OCI-LY7 (cell line): ENCODE measurements at regions of chr6 and their contacts with region 1.

Region 1: DNA sequence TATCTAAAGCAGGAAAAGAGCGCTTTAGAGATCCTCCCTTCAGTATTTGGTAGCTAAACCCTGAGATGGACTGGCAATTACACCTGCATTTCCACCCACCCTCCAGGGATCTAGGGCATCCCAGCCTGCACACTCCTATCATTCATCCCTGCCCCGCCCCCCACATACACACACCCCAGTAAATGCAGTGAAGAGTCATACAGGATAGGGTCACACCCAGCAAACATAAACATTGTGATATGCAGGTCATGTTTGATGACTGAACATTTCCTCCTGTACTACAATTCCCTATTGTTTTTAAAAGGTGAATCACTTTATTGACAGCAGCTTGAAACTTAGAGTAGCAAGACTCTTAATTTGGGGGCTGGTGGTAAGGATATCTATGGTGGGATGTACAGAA is 112.9 kb downstream of the FOXO3 start:
- DNase-seq: no peak
- H3K4me3 ChIP-seq: peak overlapping the region; percentile 4
- H3K27ac ChIP-seq: peak overlapping the region; percentile 44
- H3K4me1 ChIP-seq: peaks cover 40% of the 10 kb centered on the region
- CTCF ChIP-seq: no peak

Region 2: GRCh38 chr6:108565893-108566292 is 107.7 kb before region 1 on chr6:
- CTCF ChIA-PET with region 1: no interaction called
- POLR2A ChIA-PET with region 1: interaction called, 7 read pairs
- intact Hi-C with region 1: loop called (anchors 2 kb)
- DNase-seq: peak; percentile 76
- H3K4me3 ChIP-seq: peak overlapping the region; percentile 53
- H3K27ac ChIP-seq: peak overlapping the region; percentile 71
- H3K4me1 ChIP-seq: peaks cover 37% of the 10 kb centered on the region
- CTCF ChIP-seq: peak; percentile 48; the same call in 1 of the 2 replicates

Region 3: GRCh38 chr6:108576709-108577108 is 96.9 kb before region 1 on chr6:
- CTCF ChIA-PET with region 1: no interaction called
- POLR2A ChIA-PET with region 1: no interaction called
- intact Hi-C with region 1: no loop called
- DNase-seq: no peak
- H3K4me3 ChIP-seq: no peak overlapping the region
- H3K27ac ChIP-seq: no peak overlapping the region
- H3K4me1 ChIP-seq: peaks cover 6% of the 10 kb centered on the region
- CTCF ChIP-seq: no peak

Region 4: GRCh38 chr6:108914235-108915022 is 240.8 kb after region 1 on chr6:
- CTCF ChIA-PET with region 1: no interaction called
- POLR2A ChIA-PET with region 1: no interaction called
- intact Hi-C with region 1: no loop called
- DNase-seq: peak; percentile 64
- H3K4me3 ChIP-seq: no peak overlapping the region
- H3K27ac ChIP-seq: no peak overlapping the region
- H3K4me1 ChIP-seq: peaks cover 4% of the 10 kb centered on the region
- CTCF ChIP-seq: peak; percentile 98

Region 5: DNA sequence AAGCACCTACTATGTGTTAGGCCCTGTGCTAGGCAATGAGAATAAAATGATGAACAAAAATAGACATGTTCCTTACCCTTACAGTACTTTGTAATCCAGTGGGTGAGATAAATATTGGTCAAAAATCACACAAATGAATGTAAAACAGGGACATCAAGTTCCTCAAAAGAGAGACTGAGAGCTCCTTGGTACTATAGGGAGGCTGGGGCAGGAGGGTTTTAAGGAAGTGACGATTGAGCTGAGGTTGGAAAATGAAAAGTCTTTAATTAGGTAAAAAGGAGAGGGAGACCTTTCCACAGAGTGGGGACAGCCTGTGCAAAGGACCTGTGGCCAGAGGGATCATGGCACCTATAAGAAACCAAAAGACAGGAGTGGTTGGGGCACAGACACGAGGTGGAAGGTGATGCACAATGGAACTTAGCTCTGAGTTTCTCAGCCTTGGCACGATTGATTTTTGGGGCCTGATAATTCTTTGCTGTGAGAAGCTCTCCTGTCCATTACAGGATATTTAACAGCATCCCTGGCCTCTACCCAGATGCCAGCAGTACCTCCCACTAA is 562.0 kb after region 1 on chr6:
- CTCF ChIA-PET with region 1: no interaction called
- POLR2A ChIA-PET with region 1: interaction called, 11 read pairs
- intact Hi-C with region 1: no loop called
- DNase-seq: no peak
- H3K4me3 ChIP-seq: no peak overlapping the region
- H3K27ac ChIP-seq: no peak overlapping the region
- H3K4me1 ChIP-seq: no peaks in the 10 kb centered on the region
- CTCF ChIP-seq: no peak